GM13977 (cell line): ENCODE measurements at regions of chr4 and their contacts with region 1.

Region 1: GRCh38 chr4:175891851-175892250 is 79.8 kb upstream of the GPM6A start:
- DNase-seq: peak; percentile 18
- CTCF ChIP-seq: peak; percentile 60

Region 2: DNA sequence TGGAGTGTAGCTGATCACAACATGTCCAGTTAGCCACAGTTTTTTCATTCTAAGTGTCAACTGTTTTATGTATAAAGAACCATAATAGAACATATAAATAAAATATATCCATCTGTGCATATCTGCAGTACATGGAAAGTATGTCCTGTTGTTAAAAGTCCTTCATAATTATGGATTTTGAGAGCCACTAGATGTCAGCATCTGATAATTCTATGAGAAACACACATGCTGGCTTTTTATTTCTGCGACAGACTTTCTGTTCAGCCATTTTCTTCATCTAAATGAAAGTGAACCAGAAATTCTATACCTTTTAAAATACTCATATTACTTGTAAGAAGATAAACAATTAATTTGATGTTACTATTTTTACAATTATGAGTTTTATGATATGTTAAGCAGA is 331.2 kb before region 1 on chr4:
- in situ Hi-C with region 1: loop called (anchors 25 kb)
- DNase-seq: peak; percentile 39
- CTCF ChIP-seq: peak; percentile 22